HepG2 (cell line): ENCODE measurements at regions of chr6 and their contacts with region 1.

Region 1: DNA sequence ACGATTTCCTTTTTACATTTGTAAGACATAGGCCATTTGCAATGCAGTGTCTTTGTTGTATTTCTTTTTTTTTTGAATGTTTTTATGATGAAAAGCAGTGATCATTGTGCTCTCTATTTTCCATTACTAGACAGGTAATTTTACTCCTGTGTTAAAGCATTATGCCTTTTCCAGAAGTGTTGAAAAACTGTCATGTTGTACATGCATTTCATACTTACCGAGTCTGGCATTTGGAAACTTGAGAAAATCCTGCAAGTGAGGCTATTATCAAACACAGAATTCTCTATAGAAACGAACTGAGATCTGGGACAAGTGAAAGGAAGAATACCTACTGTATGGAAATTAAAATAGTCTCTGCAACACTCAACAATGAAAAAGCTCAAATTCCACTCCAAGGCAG is 78.6 kb upstream of the CNR1 start:
- DNase-seq: no peak
- ATAC-seq: no peak
- H3K4me3 ChIP-seq: no peak overlapping the region
- H3K27ac ChIP-seq: no peak overlapping the region
- H3K4me1 ChIP-seq: no peaks in the 10 kb centered on the region
- H3K27me3 ChIP-seq: no peaks in the 10 kb centered on the region
- CTCF ChIP-seq: no peak
- EP300 ChIP-seq: no peak
- POLR2A ChIP-seq: no peak
- RAD21 ChIP-seq: no peak

Region 2: GRCh38 chr6:87756858-87757257 is 487.9 kb before region 1 on chr6:
- CTCF ChIA-PET with region 1: no interaction called
- POLR2A ChIA-PET with region 1: no interaction called
- in situ Hi-C with region 1: no loop called
- intact Hi-C with region 1: no loop called
- DNase-seq: no peak
- ATAC-seq: no peak
- H3K4me3 ChIP-seq: no peak overlapping the region
- H3K27ac ChIP-seq: no peak overlapping the region
- H3K4me1 ChIP-seq: peaks cover 35% of the 10 kb centered on the region
- H3K27me3 ChIP-seq: no peaks in the 10 kb centered on the region
- CTCF ChIP-seq: no peak
- EP300 ChIP-seq: no peak
- POLR2A ChIP-seq: no peak
- RAD21 ChIP-seq: no peak

Region 3: DNA sequence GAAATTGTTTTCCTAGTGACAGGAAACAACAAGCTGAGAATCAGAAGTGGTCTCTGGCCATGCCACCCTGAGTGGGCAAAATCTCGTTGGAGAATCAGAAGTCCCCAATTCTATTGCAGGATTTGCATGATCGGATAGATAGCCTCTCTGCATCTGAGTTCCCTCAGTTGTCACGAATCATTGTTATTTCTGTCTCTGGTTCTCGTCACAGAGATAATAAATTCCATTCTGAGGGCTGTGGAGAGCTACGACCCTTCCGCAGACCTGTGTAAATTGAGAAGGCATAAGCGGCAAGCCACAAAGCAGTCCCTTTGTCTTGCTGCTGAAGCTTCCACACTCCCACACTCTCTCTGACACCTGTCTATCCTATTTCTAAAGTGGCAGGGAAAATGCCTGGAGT is 23.8 kb after region 1 on chr6:
- CTCF ChIA-PET with region 1: no interaction called
- POLR2A ChIA-PET with region 1: no interaction called
- in situ Hi-C with region 1: no loop called
- intact Hi-C with region 1: loop called (anchors 1 kb)
- DNase-seq: no peak
- ATAC-seq: no peak
- H3K4me3 ChIP-seq: no peak overlapping the region
- H3K27ac ChIP-seq: no peak overlapping the region
- H3K4me1 ChIP-seq: no peaks in the 10 kb centered on the region
- H3K27me3 ChIP-seq: no peaks in the 10 kb centered on the region
- CTCF ChIP-seq: no peak
- EP300 ChIP-seq: no peak
- POLR2A ChIP-seq: no peak
- RAD21 ChIP-seq: no peak